ENCODE measurements at regions of chr7 and their contacts with region 1.

Region 1: DNA sequence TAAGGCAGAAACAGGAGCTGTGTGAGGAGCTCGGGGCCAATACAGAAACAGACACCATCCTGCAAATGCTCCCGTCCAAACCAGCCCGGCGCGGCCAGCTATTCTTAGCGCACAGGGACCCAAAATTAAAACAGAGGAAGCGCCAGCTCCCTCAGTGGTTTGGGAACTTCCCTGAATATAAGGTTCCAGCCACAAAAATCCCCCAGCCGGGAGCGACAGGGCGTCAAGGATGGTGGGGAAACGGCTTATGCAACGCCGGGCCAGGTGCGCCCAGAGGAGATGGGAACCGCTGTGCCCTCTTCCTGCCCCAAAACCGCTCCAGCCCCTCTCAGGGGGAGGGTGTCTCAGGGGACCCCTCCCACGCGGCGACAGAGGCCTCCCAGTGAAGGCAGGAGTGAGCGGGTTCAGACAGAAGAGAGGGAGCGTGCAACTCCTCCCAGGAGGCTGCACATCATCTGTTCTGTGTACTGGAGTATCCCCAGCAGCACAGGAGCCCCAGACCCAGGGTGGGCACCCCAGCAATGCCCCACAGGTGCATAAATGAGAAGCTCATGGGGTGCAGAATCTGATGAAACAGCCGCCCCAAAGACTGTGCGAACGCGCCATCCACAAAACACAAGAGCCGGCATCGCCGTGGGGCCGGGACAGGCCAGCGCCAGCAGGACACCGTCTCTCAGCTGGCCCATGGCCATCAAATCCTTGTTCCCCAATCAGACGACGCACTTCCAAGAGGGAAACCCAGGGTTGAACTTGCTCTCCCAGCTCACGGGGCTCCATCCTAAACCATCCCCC is 73.9 kb upstream of the PDGFA start:
- DNase-seq: no peak

Region 2: DNA sequence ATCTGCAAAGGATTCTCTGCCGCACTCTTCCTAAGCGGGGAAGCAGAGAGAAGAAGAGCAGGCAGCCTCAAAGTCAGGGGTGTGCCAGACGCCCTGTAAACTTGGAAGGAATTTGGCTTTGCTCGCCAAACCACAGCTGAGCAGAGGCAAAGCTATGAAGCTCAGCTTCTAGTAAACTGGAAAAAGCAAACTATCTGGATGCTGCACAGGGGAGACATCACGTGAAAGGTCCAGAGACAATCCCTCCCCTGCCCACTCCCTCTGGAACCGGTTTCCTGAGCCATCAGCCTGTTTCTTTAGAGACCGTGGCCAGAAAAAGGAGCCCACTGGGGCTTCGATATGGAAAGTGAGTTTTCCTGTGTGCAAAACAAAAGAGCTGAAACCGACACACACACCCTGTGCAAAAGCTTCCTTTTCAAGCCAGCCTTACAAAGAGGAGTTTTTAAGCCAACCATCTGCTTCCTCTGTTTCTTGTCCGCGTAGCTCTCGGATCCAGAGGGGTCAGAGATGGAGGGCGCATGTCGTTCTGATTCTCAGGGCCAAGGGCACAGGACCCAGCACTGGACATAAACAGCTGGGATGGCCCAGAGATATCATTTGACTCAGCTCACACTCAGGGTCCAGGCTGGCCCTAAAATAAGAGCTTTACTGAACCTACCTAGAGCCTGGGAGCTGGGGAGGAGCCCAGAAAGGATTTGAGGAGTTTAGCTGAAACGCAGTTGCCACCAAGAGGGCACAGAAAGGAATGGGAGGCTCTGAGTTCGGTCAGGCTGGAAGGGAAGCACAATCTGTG is 74.8 kb after region 1 on chr7:
- intact Hi-C with region 1: loop called in 1 of 2 experiments (anchors 2 kb)
- DNase-seq: peak; percentile 78